ENCODE measurements at regions of chr9 and their contacts with region 1.

Region 1: DNA sequence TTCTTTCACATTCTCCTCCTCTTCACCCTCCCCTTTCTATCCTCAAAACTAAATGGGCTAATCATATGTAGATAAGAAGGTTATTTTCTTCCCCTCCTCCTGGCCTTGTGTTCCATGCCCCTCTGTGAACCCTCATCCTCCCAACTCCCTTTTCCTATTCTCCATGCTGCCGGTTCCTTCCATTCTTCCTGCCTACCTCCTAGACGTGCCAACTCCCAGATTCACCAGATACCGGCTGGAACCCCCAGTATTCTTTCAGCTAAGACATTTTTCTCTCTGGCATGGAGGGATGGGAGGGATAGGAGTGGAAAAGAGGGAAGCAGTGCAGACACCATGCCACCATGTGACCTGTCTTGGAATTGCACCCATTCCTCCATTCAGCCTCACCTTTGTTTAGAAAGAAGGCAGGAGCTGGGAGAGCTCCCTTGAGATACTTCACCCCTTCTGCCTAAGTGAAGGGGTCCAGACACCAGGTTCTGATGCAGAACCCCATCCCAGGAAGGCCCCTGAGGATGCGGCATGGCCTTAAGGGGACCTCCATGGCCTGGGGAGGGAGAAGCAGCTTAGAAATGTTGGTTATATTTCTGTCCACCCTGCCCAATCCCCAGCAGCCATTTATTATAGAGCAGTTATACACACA is 4.8 kb downstream of the DNAJB5 start:
- DNase-seq: peak; percentile 80
- H3K4me3 ChIP-seq: no peak overlapping the region; a peak in 1 of 4 replicates
- H3K27ac ChIP-seq: peak overlapping the region; percentile 75 to 88; a peak in 3 of 4 replicates
- H3K4me1 ChIP-seq: peaks cover 28 to 48% of the 10 kb centered on the region in 2 experiments
- H3K27me3 ChIP-seq: no peaks in the 10 kb centered on the region
- CTCF ChIP-seq: peak; percentile 74
- EP300 ChIP-seq: no peak
- RAD21 ChIP-seq: peak; percentile 75

Region 2: GRCh38 chr9:34759432-34760134 is 234.8 kb before region 1 on chr9:
- CTCF ChIA-PET with region 1: interaction called, 21 read pairs
- POLR2A ChIA-PET with region 1: no interaction called
- DNase-seq: no peak
- H3K4me3 ChIP-seq: no peak overlapping the region
- H3K27ac ChIP-seq: no peak overlapping the region
- H3K4me1 ChIP-seq: no peaks in the 10 kb centered on the region
- H3K27me3 ChIP-seq: peaks cover 10% of the 10 kb centered on the region; the same call in 1 of the 2 replicates
- CTCF ChIP-seq: no peak
- EP300 ChIP-seq: no peak
- RAD21 ChIP-seq: no peak

Region 3: GRCh38 chr9:34929506-34930102 is 64.8 kb before region 1 on chr9:
- CTCF ChIA-PET with region 1: interaction called, 16 read pairs
- POLR2A ChIA-PET with region 1: no interaction called
- DNase-seq: peak; percentile 59
- H3K4me3 ChIP-seq: no peak overlapping the region
- H3K27ac ChIP-seq: no peak overlapping the region
- H3K4me1 ChIP-seq: peaks cover 0 to 6% of the 10 kb centered on the region in 2 experiments; a peak in 1 of 4 replicates
- H3K27me3 ChIP-seq: peaks cover 9% of the 10 kb centered on the region
- CTCF ChIP-seq: peak; percentile 63
- EP300 ChIP-seq: no peak
- RAD21 ChIP-seq: peak; percentile 29; the same call in 1 of the 2 replicates

Region 4: DNA sequence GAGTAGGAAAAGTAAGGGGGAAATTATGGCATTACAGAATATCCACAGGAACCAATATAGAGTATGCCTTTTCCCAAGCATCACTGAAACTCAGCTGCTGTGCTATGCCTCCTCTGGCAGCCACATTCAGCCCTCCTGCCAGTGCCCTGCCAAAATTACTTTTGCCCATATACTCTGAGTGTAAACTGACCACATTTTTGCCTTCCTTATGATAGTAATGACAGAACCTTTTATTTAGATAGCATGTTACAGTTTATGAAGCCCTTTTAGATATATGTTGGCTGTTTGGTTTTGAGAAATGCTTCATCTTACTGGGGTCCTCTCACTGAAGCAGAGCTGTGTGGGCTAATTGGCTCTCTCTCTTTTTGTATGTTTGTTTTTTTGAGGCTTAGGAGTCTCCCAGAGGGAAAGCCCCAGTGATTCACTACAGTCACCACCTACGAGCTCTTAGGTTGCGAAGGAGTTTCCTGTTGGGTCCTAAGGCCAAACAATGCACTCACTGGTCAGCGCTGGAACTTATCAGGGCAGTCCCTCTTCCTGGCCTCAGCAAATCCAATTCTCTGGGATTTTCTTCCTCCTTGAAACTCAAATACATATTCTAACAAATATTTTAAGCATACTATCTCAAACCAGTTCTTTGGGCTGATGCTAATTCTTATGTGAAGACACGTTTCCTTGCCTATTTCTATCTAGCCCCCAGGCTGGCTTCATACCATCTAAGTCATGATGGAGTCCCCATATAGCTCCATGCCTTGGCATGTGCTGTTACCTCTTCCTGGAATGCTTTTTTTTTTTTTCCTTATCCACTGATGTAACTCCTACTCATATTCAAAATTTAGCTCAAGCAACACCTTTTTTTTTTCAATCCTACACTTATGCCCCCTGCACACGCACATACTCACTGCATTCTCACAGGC is 32.5 kb before region 1 on chr9:
- CTCF ChIA-PET with region 1: interaction called, 11 read pairs
- POLR2A ChIA-PET with region 1: no interaction called
- DNase-seq: no peak
- H3K4me3 ChIP-seq: no peak overlapping the region
- H3K27ac ChIP-seq: no peak overlapping the region
- H3K4me1 ChIP-seq: peaks cover 0 to 3% of the 10 kb centered on the region in 2 experiments; a peak in 1 of 4 replicates
- H3K27me3 ChIP-seq: peaks cover 63% of the 10 kb centered on the region
- CTCF ChIP-seq: no peak
- EP300 ChIP-seq: no peak
- RAD21 ChIP-seq: no peak

Region 5: GRCh38 chr9:34971146-34971811 is 23.1 kb before region 1 on chr9:
- CTCF ChIA-PET with region 1: interaction called, 11 read pairs
- POLR2A ChIA-PET with region 1: no interaction called
- DNase-seq: no peak
- H3K4me3 ChIP-seq: no peak overlapping the region
- H3K27ac ChIP-seq: no peak overlapping the region
- H3K4me1 ChIP-seq: no peaks in the 10 kb centered on the region
- H3K27me3 ChIP-seq: peaks cover 36% of the 10 kb centered on the region
- CTCF ChIP-seq: no peak
- EP300 ChIP-seq: no peak
- RAD21 ChIP-seq: no peak

Region 6: DNA sequence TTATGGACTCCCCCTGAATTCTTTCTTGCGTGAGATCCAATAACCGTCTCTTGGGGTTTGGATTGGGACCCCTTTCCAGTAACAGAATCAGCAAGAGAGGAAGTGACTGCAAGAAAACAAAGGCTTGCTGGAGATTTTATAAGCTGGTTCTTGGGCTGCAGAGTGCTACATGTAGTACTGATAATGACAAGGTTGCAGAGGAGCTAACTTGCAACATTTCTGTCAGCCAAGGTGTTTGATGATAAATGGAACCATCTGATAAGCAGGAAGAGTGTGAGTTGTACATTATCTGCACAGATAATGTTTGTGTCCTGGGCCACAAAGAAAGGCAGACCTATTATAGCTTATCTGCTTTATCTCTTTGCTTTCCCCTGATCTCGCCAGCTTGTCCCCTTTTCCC is 32.3 kb after region 1 on chr9:
- CTCF ChIA-PET with region 1: interaction called, 11 read pairs
- POLR2A ChIA-PET with region 1: no interaction called
- DNase-seq: no peak
- H3K4me3 ChIP-seq: no peak overlapping the region
- H3K27ac ChIP-seq: 0 out of 4 replicates have a peak overlapping the region, but pooled peaks of 1 of the 2 experiments have one; percentile 14
- H3K4me1 ChIP-seq: peaks cover 0 to 6% of the 10 kb centered on the region in 2 experiments; a peak in 1 of 4 replicates
- H3K27me3 ChIP-seq: no peaks in the 10 kb centered on the region
- CTCF ChIP-seq: no peak
- EP300 ChIP-seq: no peak
- RAD21 ChIP-seq: no peak

Region 7: GRCh38 chr9:35448496-35448895 is 454.1 kb after region 1 on chr9:
- CTCF ChIA-PET with region 1: no interaction called
- POLR2A ChIA-PET with region 1: no interaction called
- DNase-seq: no peak
- H3K4me3 ChIP-seq: no peak overlapping the region
- H3K27ac ChIP-seq: no peak overlapping the region
- H3K4me1 ChIP-seq: no peaks in the 10 kb centered on the region
- H3K27me3 ChIP-seq: no peaks in the 10 kb centered on the region
- CTCF ChIP-seq: no peak
- EP300 ChIP-seq: no peak
- RAD21 ChIP-seq: no peak